ENCODE measurements at regions of chr3 and their contacts with region 1.

Region 1: GRCh38 chr3:117589454-117589853 is 879.9 kb downstream of the TUSC7 start:
- DNase-seq: no peak

Region 2: DNA sequence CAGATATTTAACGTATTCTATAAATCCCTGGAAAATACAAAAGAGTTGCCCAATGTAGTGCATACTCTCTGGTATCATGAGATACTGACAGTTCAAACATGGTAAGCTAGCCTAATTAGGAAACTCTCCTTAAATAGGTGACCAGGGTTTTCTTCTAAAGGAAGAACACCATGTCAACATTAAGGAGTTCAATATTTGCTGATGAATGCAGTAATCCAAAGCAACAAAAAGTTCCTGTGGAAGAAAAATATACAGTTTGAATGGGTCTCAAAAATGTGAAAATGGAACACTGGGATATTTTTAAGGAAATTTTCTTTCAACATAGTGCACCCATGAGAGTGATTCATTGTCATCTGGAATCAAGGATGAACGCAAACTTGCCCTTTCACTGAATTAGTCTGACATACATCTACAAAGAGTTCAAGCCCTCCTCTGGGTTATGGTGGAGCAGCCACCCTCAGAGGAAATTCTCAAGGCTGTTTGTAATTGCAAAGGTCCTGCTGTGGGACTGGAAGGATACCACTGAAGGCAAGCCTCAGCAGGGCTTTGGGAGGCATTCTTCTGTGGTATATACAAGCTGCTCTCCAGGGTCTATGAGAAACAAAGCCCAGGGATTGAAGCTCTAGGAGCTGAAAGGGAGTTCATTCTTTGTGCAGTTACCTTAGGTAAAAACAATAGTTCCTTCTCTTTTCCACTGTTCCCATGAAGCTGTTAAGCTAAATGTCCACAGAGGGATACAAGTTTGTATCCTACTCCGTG is 179.6 kb before region 1 on chr3:
- intact Hi-C with region 1: loop called in 1 of 2 experiments (anchors 5 kb)
- DNase-seq: no peak